B cell (primary cell): ENCODE measurements at regions of chr13 and their contacts with region 1.

Region 1: GRCh38 chr13:48580185-48580803 is 47.4 kb upstream of the RCBTB2 start:
- DNase-seq: peak; percentile 78
- ATAC-seq: peak; percentile 47
- H3K4me3 ChIP-seq: no peak overlapping the region
- H3K4me3 Mint-ChIP-seq: no peak overlapping the region
- H3K27ac ChIP-seq: no peak overlapping the region
- H3K27ac Mint-ChIP-seq: peak overlapping the region; percentile 41
- H3K4me1 ChIP-seq: peaks cover 18 to 19% of the 10 kb centered on the region in 2 donors
- H3K4me1 Mint-ChIP-seq: peaks cover 17% of the 10 kb centered on the region
- H3K27me3 ChIP-seq: peaks cover 0 to 84% (median 71%) of the 10 kb centered on the region in 4 experiments
- H3K27me3 Mint-ChIP-seq: peaks cover 72% of the 10 kb centered on the region
- CTCF ChIP-seq: peak; percentile 85

Region 2: DNA sequence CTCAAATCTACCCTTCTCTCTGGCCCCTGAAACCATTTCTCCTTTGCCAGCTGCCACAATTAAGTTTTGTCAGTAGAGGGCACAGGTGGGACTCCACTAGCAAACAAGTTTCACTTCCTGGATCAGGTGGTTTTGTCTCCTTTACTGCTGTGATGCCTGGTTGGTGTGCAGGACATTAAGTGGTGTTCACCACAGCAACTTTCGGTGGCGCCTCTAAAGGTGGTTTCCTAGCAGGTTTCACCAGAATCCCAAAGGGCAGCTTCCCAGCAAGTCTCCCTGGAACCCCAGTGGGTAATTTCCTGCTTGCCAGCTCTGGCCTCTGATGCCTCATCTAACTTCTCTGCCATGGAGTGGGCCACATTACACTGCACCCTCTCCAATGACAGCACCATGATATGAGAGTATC is 502.0 kb before region 1 on chr13:
- CTCF ChIA-PET with region 1: interaction called, 10 read pairs
- POLR2A ChIA-PET with region 1: no interaction called
- intact Hi-C with region 1: loop called (anchors 1 kb)
- DNase-seq: peak; percentile 81
- ATAC-seq: peak; percentile 99
- H3K4me3 ChIP-seq: no peak overlapping the region
- H3K4me3 Mint-ChIP-seq: no peak overlapping the region
- H3K27ac ChIP-seq: peak overlapping the region in 1 of 2 donors; percentile 55
- H3K27ac Mint-ChIP-seq: peak overlapping the region; percentile 1
- H3K4me1 ChIP-seq: peaks cover 5 to 6% of the 10 kb centered on the region in 2 donors
- H3K4me1 Mint-ChIP-seq: peaks cover 9% of the 10 kb centered on the region
- H3K27me3 ChIP-seq: no peaks in the 10 kb centered on the region
- H3K27me3 Mint-ChIP-seq: no peaks in the 10 kb centered on the region
- CTCF ChIP-seq: peak; percentile 74

Region 3: DNA sequence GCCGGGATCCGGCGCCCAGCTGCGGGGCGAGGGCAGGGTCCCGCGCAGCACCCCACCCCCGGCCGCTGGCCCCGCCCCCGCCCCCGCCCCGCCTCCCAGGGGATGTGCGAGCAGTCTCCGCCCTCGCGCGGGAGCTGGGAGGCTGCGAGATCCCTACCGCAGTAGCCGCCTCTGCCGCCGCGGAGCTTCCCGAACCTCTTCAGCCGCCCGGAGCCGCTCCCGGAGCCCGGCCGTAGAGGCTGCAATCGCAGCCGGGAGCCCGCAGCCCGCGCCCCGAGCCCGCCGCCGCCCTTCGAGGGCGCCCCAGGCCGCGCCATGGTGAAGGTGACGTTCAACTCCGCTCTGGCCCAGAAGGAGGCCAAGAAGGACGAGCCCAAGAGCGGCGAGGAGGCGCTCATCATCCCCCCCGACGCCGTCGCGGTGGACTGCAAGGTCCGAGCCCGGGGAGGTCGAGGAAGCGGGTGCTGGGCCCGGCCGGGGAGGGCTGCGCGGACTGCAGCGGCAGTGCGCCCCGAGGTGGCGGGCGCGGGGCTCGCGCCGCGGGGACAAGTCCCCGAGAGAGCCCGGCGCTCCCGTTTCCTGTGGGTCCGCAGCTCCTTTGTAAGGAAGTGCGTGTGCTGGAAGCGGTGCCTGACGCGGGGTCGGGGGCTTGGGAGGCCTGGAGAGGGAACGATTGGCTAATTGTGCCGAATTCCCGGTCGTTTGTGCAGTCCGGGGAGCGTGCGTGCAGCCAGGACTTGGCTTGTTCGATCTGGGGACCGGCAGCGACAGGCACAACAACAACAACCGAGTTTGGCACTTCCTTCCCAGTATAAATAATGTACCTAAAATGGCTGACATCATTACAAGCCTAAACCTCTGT is 347.0 kb before region 1 on chr13 and contains the start of gene ITM2B:
- CTCF ChIA-PET with region 1: interaction called, 10 read pairs
- POLR2A ChIA-PET with region 1: interaction called, 5 read pairs
- intact Hi-C with region 1: loop called (anchors 5 kb)
- DNase-seq: peak; percentile 80
- ATAC-seq: peak; percentile 78
- H3K4me3 ChIP-seq: peak within 1 kb of the TSS; percentile 84 to 98 (median 89)
- H3K4me3 Mint-ChIP-seq: peak within 1 kb of the TSS; percentile 96
- H3K27ac ChIP-seq: peak within 1 kb of the TSS; percentile 83 to 89
- H3K27ac Mint-ChIP-seq: peak within 1 kb of the TSS; percentile 97
- H3K4me1 ChIP-seq: peaks cover 27 to 36% of the 10 kb centered on the region in 2 donors
- H3K4me1 Mint-ChIP-seq: peaks cover 46% of the 10 kb centered on the region
- H3K27me3 ChIP-seq: no peaks in the 10 kb centered on the region
- H3K27me3 Mint-ChIP-seq: peaks cover 5% of the 10 kb centered on the region
- CTCF ChIP-seq: peak; percentile 57
- total RNA-seq, gene ITM2B: 165 and 177 TPM in 2 replicates

Region 4: DNA sequence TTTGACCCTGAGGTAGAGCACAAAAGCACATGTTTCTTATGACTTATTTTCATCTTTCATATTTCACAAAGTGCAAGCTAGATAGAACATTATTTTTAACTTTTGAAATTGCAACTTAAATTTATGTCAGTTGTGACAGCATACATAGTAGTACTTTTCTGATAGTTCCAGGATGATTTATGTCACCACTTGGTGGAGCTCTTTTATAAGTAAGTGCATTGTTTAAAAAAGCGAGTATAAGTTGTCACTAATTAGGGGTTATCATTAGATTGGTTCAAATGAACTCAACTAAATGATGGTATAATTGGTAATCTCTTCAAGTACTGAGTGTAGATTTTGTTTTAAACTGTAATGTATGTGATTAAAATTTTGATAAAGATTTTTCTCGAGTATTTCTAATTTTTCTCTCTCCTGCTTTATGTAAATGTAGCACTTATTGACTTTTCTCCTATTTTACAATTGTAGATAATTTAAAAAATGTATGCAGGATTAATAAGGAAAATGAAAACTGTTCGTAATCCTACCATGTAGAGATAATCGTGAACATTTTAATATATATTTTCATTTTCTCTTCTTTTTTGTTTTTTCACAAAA is 245.7 kb before region 1 on chr13:
- CTCF ChIA-PET with region 1: interaction called, 140 read pairs
- POLR2A ChIA-PET with region 1: no interaction called
- intact Hi-C with region 1: loop called (anchors 1 kb)
- DNase-seq: peak; percentile 63
- ATAC-seq: peak; percentile 33
- H3K4me3 ChIP-seq: no peak overlapping the region
- H3K4me3 Mint-ChIP-seq: no peak overlapping the region
- H3K27ac ChIP-seq: no peak overlapping the region
- H3K27ac Mint-ChIP-seq: no peak overlapping the region
- H3K4me1 ChIP-seq: no peaks in the 10 kb centered on the region
- H3K4me1 Mint-ChIP-seq: peaks cover 12% of the 10 kb centered on the region
- H3K27me3 ChIP-seq: no peaks in the 10 kb centered on the region
- H3K27me3 Mint-ChIP-seq: no peaks in the 10 kb centered on the region
- CTCF ChIP-seq: peak; percentile 82

Region 5: DNA sequence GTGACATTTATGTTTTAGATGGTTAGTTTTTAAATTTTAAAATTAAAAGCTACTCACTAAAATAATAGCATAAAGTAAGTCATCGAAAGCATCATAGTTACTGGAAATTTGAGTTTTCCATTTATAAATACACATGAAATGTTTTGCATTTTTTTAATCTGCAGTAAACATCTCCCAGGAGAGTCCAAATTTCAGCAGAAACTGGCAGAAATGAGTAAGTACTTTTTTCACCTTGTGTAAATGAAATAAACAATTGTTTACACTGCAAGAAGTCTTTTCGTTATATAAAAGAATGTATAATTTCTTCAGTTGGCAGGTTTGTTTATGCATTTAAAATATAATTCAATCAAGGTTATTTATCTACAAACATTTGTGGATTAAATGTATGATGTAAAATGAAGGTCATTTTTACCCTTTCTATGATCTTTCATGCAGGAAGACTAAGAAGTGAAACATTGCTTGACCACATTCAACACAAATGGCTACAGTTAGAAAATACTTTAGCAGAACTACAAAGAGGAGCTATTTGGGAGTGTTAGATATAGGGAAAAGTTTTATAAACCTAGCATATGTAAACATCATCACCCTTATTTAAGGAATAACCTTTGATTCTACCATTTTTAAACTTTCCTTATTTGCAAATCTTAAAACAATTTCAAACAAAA is 103.0 kb before region 1 on chr13:
- CTCF ChIA-PET with region 1: interaction called, 12 read pairs
- POLR2A ChIA-PET with region 1: no interaction called
- intact Hi-C with region 1: no loop called
- DNase-seq: no peak
- ATAC-seq: no peak
- H3K4me3 ChIP-seq: no peak overlapping the region
- H3K4me3 Mint-ChIP-seq: no peak overlapping the region
- H3K27ac ChIP-seq: no peak overlapping the region
- H3K27ac Mint-ChIP-seq: no peak overlapping the region
- H3K4me1 ChIP-seq: no peaks in the 10 kb centered on the region
- H3K4me1 Mint-ChIP-seq: peaks cover 17% of the 10 kb centered on the region
- H3K27me3 ChIP-seq: no peaks in the 10 kb centered on the region
- H3K27me3 Mint-ChIP-seq: no peaks in the 10 kb centered on the region
- CTCF ChIP-seq: no peak

Region 6: GRCh38 chr13:48505597-48506091 is 74.7 kb before region 1 on chr13:
- CTCF ChIA-PET with region 1: interaction called, 14 read pairs
- POLR2A ChIA-PET with region 1: no interaction called
- intact Hi-C with region 1: no loop called
- DNase-seq: peak; percentile 85
- ATAC-seq: peak; percentile 84
- H3K4me3 ChIP-seq: peak overlapping the region in 2 of 5 experiments; percentile 30 to 32
- H3K4me3 Mint-ChIP-seq: peak overlapping the region; percentile 82
- H3K27ac ChIP-seq: no peak overlapping the region
- H3K27ac Mint-ChIP-seq: peak overlapping the region; percentile 84
- H3K4me1 ChIP-seq: peaks cover 36 to 37% of the 10 kb centered on the region in 2 donors
- H3K4me1 Mint-ChIP-seq: peaks cover 49% of the 10 kb centered on the region
- H3K27me3 ChIP-seq: peaks cover 0 to 49% (median 7%) of the 10 kb centered on the region in 4 experiments
- H3K27me3 Mint-ChIP-seq: peaks cover 33% of the 10 kb centered on the region
- CTCF ChIP-seq: no peak

Region 7: GRCh38 chr13:48562296-48563066 is 17.8 kb before region 1 on chr13:
- CTCF ChIA-PET with region 1: interaction called, 15 read pairs
- POLR2A ChIA-PET with region 1: no interaction called
- intact Hi-C with region 1: no loop called
- DNase-seq: peak; percentile 86
- ATAC-seq: peak; percentile 99
- H3K4me3 ChIP-seq: no peak overlapping the region
- H3K4me3 Mint-ChIP-seq: no peak overlapping the region
- H3K27ac ChIP-seq: no peak overlapping the region
- H3K27ac Mint-ChIP-seq: no peak overlapping the region
- H3K4me1 ChIP-seq: peaks cover 18 to 45% of the 10 kb centered on the region in 2 donors
- H3K4me1 Mint-ChIP-seq: peaks cover 18% of the 10 kb centered on the region
- H3K27me3 ChIP-seq: peaks cover 2 to 78% (median 66%) of the 10 kb centered on the region in 4 experiments
- H3K27me3 Mint-ChIP-seq: peaks cover 67% of the 10 kb centered on the region
- CTCF ChIP-seq: no peak

Region 8: GRCh38 chr13:48615049-48615448 is 34.8 kb after region 1 on chr13:
- CTCF ChIA-PET with region 1: no interaction called
- POLR2A ChIA-PET with region 1: no interaction called
- intact Hi-C with region 1: no loop called
- DNase-seq: no peak
- ATAC-seq: no peak
- H3K4me3 ChIP-seq: no peak overlapping the region
- H3K4me3 Mint-ChIP-seq: no peak overlapping the region
- H3K27ac ChIP-seq: no peak overlapping the region
- H3K27ac Mint-ChIP-seq: no peak overlapping the region
- H3K4me1 ChIP-seq: no peaks in the 10 kb centered on the region
- H3K4me1 Mint-ChIP-seq: no peaks in the 10 kb centered on the region
- H3K27me3 ChIP-seq: peaks cover 0 to 5% (median 4%) of the 10 kb centered on the region in 4 experiments
- H3K27me3 Mint-ChIP-seq: peaks cover 12% of the 10 kb centered on the region
- CTCF ChIP-seq: no peak